ENCODE measurements at regions of chr6 and their contacts with region 1.

Region 1: DNA sequence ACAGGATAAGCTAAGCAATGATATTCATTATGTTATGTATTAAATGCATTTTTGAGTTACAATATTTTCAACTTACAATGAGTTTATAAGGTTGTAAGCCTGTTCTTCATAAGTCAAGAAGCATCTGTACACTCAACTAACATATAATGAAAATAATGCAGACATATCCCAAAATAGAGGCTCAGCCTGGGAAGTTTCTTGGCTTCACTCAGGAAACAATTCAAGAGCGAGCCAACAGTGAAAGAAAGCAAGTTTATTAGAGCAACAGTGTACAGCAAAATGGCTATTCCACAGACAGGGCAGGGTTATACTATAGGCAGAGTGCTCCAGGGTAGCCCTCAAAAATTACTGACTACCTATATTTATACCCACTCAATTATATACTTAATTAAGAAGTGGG is 1581.8 kb downstream of the HACE1 start:
- DNase-seq: no peak
- H3K4me3 ChIP-seq: no peak overlapping the region
- H3K27ac ChIP-seq: no peak overlapping the region
- H3K4me1 ChIP-seq: no peaks in the 10 kb centered on the region
- H3K27me3 ChIP-seq: no peaks in the 10 kb centered on the region
- CTCF ChIP-seq: no peak

Region 2: GRCh38 chr6:102670735-102671134 is 607.2 kb before region 1 on chr6:
- CTCF ChIA-PET with region 1: no interaction called
- POLR2A ChIA-PET with region 1: no interaction called
- intact Hi-C with region 1: no loop called
- DNase-seq: no peak
- H3K4me3 ChIP-seq: no peak overlapping the region
- H3K27ac ChIP-seq: no peak overlapping the region
- H3K4me1 ChIP-seq: no peaks in the 10 kb centered on the region
- H3K27me3 ChIP-seq: no peaks in the 10 kb centered on the region
- CTCF ChIP-seq: no peak

Region 3: DNA sequence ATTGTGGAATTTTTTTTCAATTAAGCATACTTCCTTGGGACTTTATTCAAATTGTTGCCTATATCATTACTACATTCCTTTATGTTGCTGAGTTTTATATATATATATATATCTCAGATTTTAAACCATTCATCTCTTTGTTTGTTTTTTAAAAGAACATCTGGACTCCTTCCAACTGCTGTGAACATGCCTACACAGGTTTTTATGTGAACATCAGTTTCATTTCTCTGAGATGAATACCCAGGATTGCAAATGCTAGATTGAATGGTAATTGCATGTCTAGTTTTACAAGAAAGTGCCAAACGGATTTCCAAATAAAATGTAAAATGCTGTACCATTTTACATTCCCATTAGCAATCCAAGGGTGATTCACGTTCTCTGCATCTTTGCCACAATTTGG is 292.5 kb after region 1 on chr6:
- CTCF ChIA-PET with region 1: no interaction called
- POLR2A ChIA-PET with region 1: no interaction called
- intact Hi-C with region 1: loop called (anchors 5 kb)
- DNase-seq: no peak
- H3K4me3 ChIP-seq: no peak overlapping the region
- H3K27ac ChIP-seq: no peak overlapping the region
- H3K4me1 ChIP-seq: no peaks in the 10 kb centered on the region
- H3K27me3 ChIP-seq: no peaks in the 10 kb centered on the region
- CTCF ChIP-seq: no peak

Measured in PC-9 (cell line).